ENCODE measurements at regions of chr19 and their contacts with region 1.

Region 1: DNA sequence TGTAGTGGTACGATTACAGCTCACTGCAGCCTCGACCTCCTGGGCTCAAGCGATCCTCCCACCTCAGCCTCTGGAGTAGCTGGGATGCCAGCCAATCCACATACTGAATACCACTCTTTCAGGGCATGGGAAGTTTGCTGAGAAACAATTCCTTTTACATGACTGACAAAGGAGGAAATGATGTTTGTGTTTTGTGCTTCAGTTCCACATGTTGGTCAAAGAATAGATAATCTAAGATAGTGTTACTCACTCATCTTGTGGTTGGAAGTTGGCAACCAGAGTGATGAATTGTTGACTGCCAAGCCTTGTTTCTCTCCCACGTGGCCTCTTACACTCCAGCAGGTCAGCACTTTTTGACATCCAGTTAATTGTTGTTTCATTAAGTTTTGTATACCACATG is 7.6 kb downstream of the MBD3L2B start:
- DNase-seq: peak; percentile 37
- H3K4me3 Mint-ChIP-seq: no peak overlapping the region
- H3K27ac Mint-ChIP-seq: peak overlapping the region; percentile 71
- H3K4me1 Mint-ChIP-seq: peaks cover 41% of the 10 kb centered on the region
- H3K27me3 Mint-ChIP-seq: no peaks in the 10 kb centered on the region

Region 2: DNA sequence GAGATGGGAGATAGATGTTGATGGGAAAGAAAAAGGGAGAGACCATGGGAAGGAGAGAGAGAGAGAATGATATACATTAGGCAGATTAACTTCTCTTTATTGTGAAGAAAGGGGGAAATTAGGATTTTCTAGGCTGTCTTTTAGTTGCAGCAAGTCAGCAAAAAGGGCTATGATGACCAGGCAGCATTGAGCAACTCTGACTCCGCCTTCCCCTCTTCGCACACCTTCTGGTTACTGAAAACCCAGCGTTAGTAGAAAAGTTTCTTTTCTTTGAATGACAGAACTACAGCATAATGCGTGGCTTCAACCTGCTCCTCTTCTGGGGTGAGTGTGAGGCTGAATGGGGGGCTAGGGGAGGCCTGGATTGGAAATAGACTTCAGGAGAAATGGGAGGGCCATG is 126.4 kb before region 1 on chr19 and contains the start of gene ADGRE1:
- CTCF ChIA-PET with region 1: no interaction called
- POLR2A ChIA-PET with region 1: no interaction called
- intact Hi-C with region 1: loop called (anchors 10 kb)
- DNase-seq: peak; percentile 71
- H3K4me3 Mint-ChIP-seq: no peak within 1 kb of the TSS
- H3K27ac Mint-ChIP-seq: peak within 1 kb of the TSS; percentile 65
- H3K4me1 Mint-ChIP-seq: peaks cover 55% of the 10 kb centered on the region
- H3K27me3 Mint-ChIP-seq: no peaks in the 10 kb centered on the region
- total RNA-seq, gene ADGRE1: 6.6 to 6.8 TPM

Region 3: DNA sequence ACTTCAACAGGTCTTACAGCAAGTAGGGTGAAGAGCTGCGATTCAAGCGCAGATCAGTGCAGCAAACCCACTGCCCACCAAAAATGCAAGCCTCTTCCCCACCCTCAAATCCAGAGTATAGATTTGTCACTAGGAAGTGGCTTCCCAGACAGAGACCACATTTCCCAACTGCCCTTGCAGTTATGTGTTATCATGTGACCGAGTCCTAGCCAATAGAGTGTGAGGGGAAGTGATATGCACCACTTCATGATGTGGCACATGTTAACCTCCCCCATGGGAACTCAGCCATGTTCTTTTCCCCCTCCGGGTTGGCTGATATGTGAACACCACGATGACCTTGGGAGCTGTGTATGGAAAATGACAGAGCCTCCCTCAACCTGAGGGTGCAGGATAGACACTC is 43.2 kb before region 1 on chr19:
- CTCF ChIA-PET with region 1: no interaction called
- POLR2A ChIA-PET with region 1: no interaction called
- intact Hi-C with region 1: no loop called
- DNase-seq: no peak
- H3K4me3 Mint-ChIP-seq: no peak overlapping the region
- H3K27ac Mint-ChIP-seq: no peak overlapping the region
- H3K4me1 Mint-ChIP-seq: no peaks in the 10 kb centered on the region
- H3K27me3 Mint-ChIP-seq: no peaks in the 10 kb centered on the region

Region 4: DNA sequence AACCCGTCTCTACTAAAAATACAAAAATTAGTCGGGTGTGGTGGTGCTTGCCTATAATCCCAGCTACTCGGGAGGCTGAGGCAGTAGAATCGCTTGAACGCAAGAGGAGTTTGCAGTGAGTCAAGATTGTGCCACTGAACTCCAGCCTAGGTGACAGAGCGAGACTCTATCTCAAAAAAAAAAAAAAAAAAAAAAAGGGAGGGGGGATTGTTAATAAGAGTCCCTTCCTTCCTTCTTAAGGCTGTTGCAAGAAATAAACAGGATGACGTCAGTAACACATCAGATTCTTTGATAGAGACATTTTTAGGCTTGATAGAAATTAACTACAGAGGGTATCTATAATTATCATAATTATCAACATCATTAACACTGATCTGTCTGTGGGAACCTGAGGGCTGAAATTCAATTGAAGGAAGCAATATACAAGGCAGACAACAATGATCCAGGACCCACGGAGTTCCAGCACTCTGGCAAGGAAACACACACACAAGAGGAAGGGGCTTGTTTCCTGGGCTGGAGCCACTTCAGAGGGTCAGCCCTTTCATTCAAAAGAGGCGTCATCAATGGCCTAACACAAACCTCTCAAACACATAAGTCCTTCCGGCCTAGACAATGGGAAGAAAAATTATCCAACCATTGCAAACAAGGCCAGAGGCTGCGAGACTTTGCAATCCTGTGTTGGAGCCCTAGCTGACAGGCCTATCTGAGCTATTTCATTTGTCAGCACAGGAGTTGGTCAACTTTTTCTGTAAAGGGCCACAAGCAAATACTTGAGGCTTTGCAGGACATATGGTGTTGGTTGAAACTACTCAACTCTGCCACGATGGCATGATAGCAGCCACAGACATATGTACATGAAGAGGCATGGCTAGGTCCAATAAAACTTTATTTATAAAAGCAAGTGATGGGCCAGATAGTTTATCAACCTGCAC is 175.3 kb after region 1 on chr19:
- CTCF ChIA-PET with region 1: no interaction called
- POLR2A ChIA-PET with region 1: no interaction called
- intact Hi-C with region 1: loop called (anchors 10 kb)
- DNase-seq: no peak
- H3K4me3 Mint-ChIP-seq: no peak overlapping the region
- H3K27ac Mint-ChIP-seq: no peak overlapping the region
- H3K4me1 Mint-ChIP-seq: peaks cover 34% of the 10 kb centered on the region
- H3K27me3 Mint-ChIP-seq: no peaks in the 10 kb centered on the region